CD8-positive, alpha-beta T cell (primary cell): ENCODE measurements at regions of chr5 and their contacts with region 1.

Region 1: GRCh38 chr5:112968411-112969106 is 8.0 kb upstream of the DCP2 start:
- DNase-seq: no peak
- ATAC-seq: no peak
- H3K4me3 ChIP-seq: no peak overlapping the region
- H3K4me3 Mint-ChIP-seq: no peak overlapping the region
- H3K27ac ChIP-seq: no peak overlapping the region
- H3K27ac Mint-ChIP-seq: no peak overlapping the region
- H3K4me1 ChIP-seq: peaks cover 5% of the 10 kb centered on the region
- H3K4me1 Mint-ChIP-seq: peaks cover 6% of the 10 kb centered on the region
- H3K27me3 ChIP-seq: no peaks in the 10 kb centered on the region
- H3K27me3 Mint-ChIP-seq: no peaks in the 10 kb centered on the region
- CTCF ChIP-seq: no peak

Region 2: DNA sequence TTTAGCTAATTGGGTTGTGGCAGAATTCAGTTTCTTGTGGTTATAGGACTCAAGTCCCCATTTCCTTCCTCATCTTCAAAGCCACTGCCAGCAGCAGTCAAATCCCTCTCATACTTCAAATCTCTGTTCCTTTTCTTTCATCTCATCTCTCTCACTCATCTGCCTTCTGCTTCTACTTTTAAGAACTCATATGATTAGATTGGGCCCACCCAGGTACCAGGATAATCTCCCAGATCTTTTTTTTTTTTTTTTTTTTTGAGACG is 38.5 kb before region 1 on chr5:
- CTCF ChIA-PET with region 1: interaction called, 5 read pairs
- POLR2A ChIA-PET with region 1: no interaction called
- intact Hi-C with region 1: loop called (anchors 2 kb)
- DNase-seq: peak in 4 of 9 experiments; percentile 18 to 75 (median 49)
- ATAC-seq: peak; percentile 81
- H3K4me3 ChIP-seq: no peak overlapping the region
- H3K4me3 Mint-ChIP-seq: peak overlapping the region; percentile 36
- H3K27ac ChIP-seq: peak overlapping the region in 1 of 2 experiments; percentile 51
- H3K27ac Mint-ChIP-seq: peak overlapping the region; percentile 12
- H3K4me1 ChIP-seq: peaks cover 37% of the 10 kb centered on the region
- H3K4me1 Mint-ChIP-seq: peaks cover 41% of the 10 kb centered on the region
- H3K27me3 ChIP-seq: no peaks in the 10 kb centered on the region
- H3K27me3 Mint-ChIP-seq: no peaks in the 10 kb centered on the region
- CTCF ChIP-seq: no peak

Region 3: DNA sequence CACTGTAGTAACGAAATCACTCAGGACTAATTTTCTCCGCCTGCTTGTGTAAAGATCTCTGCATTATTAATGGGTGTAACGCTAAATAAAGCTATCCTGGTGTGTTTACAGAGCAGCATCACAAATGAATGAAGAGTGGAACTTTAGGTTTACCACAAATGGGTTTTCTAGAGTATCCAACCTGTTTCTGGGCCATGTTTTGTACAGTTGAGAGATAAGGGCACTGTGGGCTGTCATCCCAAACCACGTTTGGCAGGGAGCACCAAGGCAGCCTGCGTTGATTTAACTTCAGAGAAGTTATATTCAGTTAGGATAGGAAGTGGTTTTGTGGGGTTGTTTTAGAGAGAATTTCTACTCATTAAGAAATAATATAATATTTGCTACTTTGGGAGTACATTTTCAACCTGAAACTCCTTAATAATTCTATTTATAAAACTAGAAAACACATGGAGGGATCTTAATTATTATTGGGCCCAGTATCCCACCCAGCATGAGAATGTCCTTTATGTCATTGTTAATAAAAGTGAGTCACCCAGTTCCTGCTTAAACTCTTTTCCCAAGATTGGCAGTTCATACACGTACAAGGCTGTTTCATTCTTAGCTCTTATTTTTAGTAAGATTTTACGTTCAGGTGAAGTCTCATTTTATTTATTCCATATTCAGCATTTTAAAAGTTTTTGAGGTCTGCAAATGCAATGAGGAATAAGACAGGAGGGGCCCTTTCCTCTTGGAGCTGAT is 1401.3 kb after region 1 on chr5:
- CTCF ChIA-PET with region 1: no interaction called
- POLR2A ChIA-PET with region 1: no interaction called
- intact Hi-C with region 1: no loop called
- DNase-seq: no peak
- ATAC-seq: no peak
- H3K4me3 ChIP-seq: no peak overlapping the region
- H3K4me3 Mint-ChIP-seq: no peak overlapping the region
- H3K27ac ChIP-seq: no peak overlapping the region
- H3K27ac Mint-ChIP-seq: no peak overlapping the region
- H3K4me1 ChIP-seq: no peaks in the 10 kb centered on the region
- H3K4me1 Mint-ChIP-seq: no peaks in the 10 kb centered on the region
- H3K27me3 ChIP-seq: no peaks in the 10 kb centered on the region
- H3K27me3 Mint-ChIP-seq: peaks cover 2% of the 10 kb centered on the region
- CTCF ChIP-seq: no peak